Left lung (tissue), 14 donors: ENCODE measurements at regions of chr12 and their contacts with region 1.

Region 1: DNA sequence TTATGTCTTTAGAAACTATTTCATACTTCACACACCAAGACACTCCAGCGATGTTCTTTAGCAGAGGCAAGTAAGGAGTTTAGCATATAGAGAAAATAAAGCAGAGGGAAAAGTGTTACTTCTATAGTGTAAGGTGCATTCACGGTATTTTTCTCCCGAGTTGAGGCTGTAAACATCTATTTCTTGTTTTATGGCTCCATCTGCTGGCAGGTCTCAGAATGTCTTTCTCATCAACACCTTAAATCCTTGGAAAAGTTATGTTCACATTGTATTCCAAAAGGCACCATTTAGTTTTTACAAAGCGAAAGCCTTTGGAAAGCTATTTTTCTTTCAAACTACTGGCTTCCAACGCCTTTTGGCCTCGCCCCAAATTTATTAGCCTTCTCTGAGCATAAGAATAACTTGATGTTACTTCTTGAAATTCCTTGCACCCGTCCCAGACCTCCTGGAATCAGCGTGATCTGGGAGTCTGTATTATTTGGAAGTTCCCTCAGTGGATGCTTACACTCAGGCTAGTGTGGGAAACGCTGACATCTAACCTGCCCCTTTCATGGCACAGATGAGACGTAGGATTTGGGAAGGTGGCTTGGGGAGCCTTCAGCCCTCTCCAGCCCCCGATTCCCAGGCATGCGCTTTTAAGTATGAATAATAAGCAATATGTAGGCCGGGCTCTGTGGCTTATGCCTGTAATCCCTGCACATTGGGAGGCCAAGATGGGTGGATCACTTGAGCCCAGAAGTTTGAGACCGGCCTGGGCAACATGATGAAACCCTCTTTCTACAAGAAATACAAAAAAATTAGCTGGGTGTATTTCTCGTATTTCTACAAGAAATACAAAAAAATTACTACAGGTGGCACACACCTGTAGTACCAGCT is 1.9 kb upstream of the PIWIL1 start:
- DNase-seq: peak in 2 of 4 donors; percentile 49 to 74
- ATAC-seq: peak; percentile 72
- H3K4me3 ChIP-seq: no peak overlapping the region
- H3K27ac ChIP-seq: no peak overlapping the region
- H3K4me1 ChIP-seq: no peaks in the 10 kb centered on the region
- H3K27me3 ChIP-seq: peaks cover 9 to 56% of the 10 kb centered on the region in 2 donors
- CTCF ChIP-seq: peak; percentile 57 to 60

Region 2: DNA sequence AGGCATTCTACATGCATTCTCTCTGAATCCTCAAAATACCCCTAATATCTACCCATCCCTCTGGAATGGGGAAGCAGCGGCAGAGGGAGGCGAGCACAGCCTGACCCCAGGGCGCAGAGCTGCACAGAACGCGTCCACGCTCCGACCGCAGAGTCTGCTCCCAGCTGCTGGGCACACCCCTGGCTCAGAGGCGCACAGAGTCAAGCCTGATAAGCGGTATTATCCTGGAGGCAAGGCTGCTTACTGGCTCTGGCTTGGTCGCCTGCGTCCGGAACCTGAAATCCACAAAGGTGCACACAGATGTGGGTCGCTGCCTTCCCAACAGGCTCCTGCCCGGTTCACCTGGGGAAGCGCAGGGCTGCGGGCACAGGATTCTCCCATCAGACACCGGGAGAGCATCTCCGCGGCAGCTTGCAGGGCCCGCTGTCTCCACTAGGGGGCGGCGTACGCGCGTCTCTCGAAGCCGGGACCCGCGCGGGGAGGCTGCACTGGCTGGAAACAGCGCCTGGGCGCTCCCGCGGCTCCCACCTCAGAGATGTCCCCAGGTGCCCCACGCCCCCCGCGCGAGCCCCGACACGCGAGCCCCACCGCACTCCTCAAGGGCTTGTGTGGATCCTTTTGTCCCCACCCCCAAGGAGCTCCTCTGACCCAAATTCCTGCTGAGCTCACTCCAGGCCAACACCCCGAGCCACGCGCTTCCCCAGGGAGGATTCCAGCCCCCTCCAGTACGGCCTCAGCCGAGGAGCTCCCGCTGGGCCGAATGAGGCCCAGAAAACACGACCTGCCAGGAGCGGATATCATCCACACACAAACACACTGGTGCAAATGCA is 293.6 kb before region 1 on chr12:
- intact Hi-C with region 1: loop called (anchors 5 to 10 kb)
- DNase-seq: peak in 2 of 4 donors; percentile 47 to 80
- ATAC-seq: peak; percentile 76
- H3K4me3 ChIP-seq: no peak overlapping the region
- H3K27ac ChIP-seq: no peak overlapping the region
- H3K4me1 ChIP-seq: no peaks in the 10 kb centered on the region
- H3K27me3 ChIP-seq: peaks cover 18 to 62% of the 10 kb centered on the region in 2 donors
- CTCF ChIP-seq: peak; percentile 74 to 83